Colonic mucosa (tissue), 4 donors: ENCODE measurements at regions of chr18 and their contacts with region 1.

Region 1: GRCh38 chr18:21914739-21915319 is 174.2 kb downstream of the MIB1 start:
- DNase-seq: peak; percentile 32
- H3K4me3 ChIP-seq: no peak overlapping the region
- H3K27ac ChIP-seq: no peak overlapping the region
- H3K4me1 ChIP-seq: no peaks in the 10 kb centered on the region
- H3K27me3 ChIP-seq: no peaks in the 10 kb centered on the region
- CTCF ChIP-seq: peak; percentile 40

Region 2: GRCh38 chr18:21747764-21748693 is 166.8 kb before region 1 on chr18:
- intact Hi-C with region 1: no loop called
- DNase-seq: no peak
- H3K4me3 ChIP-seq: no peak overlapping the region
- H3K27ac ChIP-seq: no peak overlapping the region
- H3K4me1 ChIP-seq: no peaks in the 10 kb centered on the region
- H3K27me3 ChIP-seq: no peaks in the 10 kb centered on the region
- CTCF ChIP-seq: no peak

Region 3: DNA sequence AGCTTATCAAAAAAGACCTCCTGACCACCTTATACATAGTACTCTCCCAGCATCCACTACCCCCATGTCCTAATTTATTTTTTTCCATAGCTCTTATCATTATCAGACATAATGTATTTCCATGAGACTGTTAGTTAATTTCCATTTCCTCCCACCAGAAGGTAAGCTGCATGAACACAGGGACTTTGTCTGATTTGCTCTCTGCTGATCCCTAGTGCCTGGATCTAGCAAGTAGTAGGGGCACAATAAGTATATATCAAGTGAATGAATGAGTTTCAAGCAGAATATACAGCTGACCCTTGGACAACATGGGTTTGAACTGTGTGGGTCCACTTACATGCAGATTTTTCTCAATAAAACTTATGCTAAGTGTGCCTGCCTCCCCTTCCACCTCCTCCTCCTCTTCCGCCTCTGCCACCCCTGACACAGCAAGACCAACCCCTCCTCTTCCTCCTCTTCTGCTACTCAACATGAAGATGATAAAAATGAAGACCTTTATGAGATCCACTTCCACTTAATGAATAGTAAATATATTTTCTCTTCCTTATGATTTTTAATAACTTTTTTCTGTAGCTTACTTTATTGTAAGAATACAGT is 449.1 kb after region 1 on chr18:
- intact Hi-C with region 1: loop called (anchors 10 kb)
- DNase-seq: no peak
- H3K4me3 ChIP-seq: no peak overlapping the region
- H3K27ac ChIP-seq: no peak overlapping the region
- H3K4me1 ChIP-seq: no peaks in the 10 kb centered on the region
- H3K27me3 ChIP-seq: no peaks in the 10 kb centered on the region
- CTCF ChIP-seq: peak; percentile 26

Region 4: GRCh38 chr18:22703883-22704585 is 789.2 kb after region 1 on chr18:
- intact Hi-C with region 1: loop called (anchors 10 kb)
- DNase-seq: peak; percentile 38
- H3K4me3 ChIP-seq: no peak overlapping the region
- H3K27ac ChIP-seq: no peak overlapping the region
- H3K4me1 ChIP-seq: no peaks in the 10 kb centered on the region
- H3K27me3 ChIP-seq: no peaks in the 10 kb centered on the region
- CTCF ChIP-seq: peak; percentile 82